Activated T-helper 1 cell treated with anti-CD3 and anti-CD28 coated beads, Interleukin-12 subunit alpha, Interleukin-12 subunit beta, Interleukin-2, Interleukin-4 antibody, amounts not matched to agents 30 ng/mL and 10 ng/mL and 1 ng/mL, durations not matched to agents 14 hours and 24 hours and 36 hours (primary cell): ENCODE measurements at regions of chr1 and their contacts with region 1.

Region 1: DNA sequence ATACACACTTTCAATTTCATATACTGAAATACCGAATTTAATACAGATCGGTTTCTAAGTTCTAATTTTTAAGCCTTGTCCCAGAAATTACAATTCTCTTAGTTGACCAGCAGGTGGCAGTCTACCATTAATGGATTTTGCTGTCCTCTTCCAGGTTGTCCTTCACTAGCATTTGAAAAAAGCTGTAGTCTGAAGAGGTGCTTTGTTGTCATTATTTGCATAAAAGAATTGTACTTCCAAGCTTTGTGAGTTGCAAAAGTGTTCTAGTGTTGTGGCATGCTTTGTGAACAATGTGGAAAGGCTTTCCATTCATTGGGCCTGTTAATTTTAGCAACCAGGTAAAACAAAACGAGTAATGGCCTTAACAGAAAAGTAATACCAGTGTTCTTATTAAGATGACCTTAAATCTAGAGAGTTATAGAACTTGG is 193.6 kb downstream of the RPS6KC1 start:
- DNase-seq: no peak
- H3K4me3 Mint-ChIP-seq: no peak overlapping the region
- H3K27ac Mint-ChIP-seq: no peak overlapping the region
- H3K4me1 Mint-ChIP-seq: no peaks in the 10 kb centered on the region
- H3K27me3 Mint-ChIP-seq: no peaks in the 10 kb centered on the region

Region 2: DNA sequence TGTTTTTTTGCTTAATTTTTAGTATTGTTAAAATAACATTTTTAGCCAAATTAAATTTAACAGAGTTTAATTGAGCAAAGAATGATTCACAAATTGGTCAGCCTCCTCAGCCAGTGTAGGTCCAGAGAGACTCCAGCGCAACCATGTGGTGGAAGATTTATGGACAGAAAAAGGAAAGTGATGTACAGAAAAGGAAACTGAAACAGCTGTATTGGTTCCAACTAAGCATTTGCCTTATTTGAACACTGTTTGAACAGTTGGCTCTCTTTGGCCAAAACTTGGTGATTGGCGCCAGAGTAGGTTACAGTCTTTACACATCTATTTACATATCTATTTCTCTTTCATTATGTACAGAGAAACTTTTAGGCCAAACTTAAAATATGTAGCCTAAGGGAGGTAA is 174.3 kb before region 1 on chr1:
- intact Hi-C with region 1: no loop called
- DNase-seq: peak; percentile 17
- H3K4me3 Mint-ChIP-seq: no peak overlapping the region
- H3K27ac Mint-ChIP-seq: peak overlapping the region; percentile 12
- H3K4me1 Mint-ChIP-seq: peaks cover 32% of the 10 kb centered on the region
- H3K27me3 Mint-ChIP-seq: no peaks in the 10 kb centered on the region

Region 3: DNA sequence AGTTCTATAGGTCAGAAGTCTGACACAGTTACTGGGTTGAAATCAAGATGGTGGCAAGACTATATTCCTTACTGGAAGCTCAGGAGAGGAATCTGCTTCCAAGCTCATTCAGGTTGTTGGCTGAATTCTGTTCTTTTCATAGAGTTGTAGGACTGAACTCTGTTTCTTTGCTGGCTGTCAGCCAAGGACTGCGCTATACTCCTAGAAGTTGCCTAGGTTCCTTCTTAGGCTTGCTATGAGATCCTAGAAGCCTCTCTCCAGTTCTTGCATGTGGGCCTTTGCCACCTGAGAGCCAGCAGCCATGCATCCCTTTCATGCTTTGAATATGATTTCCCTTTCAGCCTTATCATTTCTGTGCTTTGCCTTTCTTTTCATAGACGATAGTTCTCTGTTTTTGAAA is 17.2 kb before region 1 on chr1:
- intact Hi-C with region 1: no loop called
- DNase-seq: no peak
- H3K4me3 Mint-ChIP-seq: no peak overlapping the region
- H3K27ac Mint-ChIP-seq: no peak overlapping the region
- H3K4me1 Mint-ChIP-seq: peaks cover 6% of the 10 kb centered on the region
- H3K27me3 Mint-ChIP-seq: no peaks in the 10 kb centered on the region

Region 4: GRCh38 chr1:213381572-213382084 is 136.9 kb after region 1 on chr1:
- intact Hi-C with region 1: no loop called
- DNase-seq: no peak
- H3K4me3 Mint-ChIP-seq: no peak overlapping the region
- H3K27ac Mint-ChIP-seq: no peak overlapping the region
- H3K4me1 Mint-ChIP-seq: no peaks in the 10 kb centered on the region
- H3K27me3 Mint-ChIP-seq: no peaks in the 10 kb centered on the region

Region 5: GRCh38 chr1:214123061-214123784 is 878.5 kb after region 1 on chr1:
- intact Hi-C with region 1: loop called (anchors 2 kb)
- DNase-seq: no peak
- H3K4me3 Mint-ChIP-seq: no peak overlapping the region
- H3K27ac Mint-ChIP-seq: no peak overlapping the region
- H3K4me1 Mint-ChIP-seq: no peaks in the 10 kb centered on the region
- H3K27me3 Mint-ChIP-seq: peaks cover 5% of the 10 kb centered on the region